Sciatic nerve (tissue), 2 donors: ENCODE measurements at regions of chr10 and their contacts with region 1.

Region 1: GRCh38 chr10:107148906-107149305 is 15.6 kb downstream of the SORCS1 start:
- DNase-seq: no peak
- ATAC-seq: no peak

Region 2: DNA sequence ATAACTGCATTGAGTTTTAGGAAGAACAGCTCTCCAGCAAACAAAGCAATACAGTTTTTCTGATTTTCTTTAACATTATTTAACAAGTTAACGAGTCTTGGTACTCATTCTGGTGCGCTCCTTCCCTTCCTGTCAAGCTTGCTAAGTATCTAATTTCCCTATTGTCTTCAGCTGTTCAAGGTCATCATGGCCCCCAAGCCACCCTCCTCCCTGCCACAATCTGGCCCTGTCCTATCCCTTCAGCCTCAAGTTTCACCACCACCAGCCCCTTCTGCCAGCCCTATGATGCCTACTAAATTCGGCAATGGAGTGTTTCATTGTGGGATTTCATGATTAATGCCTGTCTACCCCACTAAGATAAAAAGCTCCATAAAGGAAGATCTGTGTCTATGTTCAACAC is 105.4 kb before region 1 on chr10:
- intact Hi-C with region 1: loop called (anchors 5 kb)
- DNase-seq: no peak
- ATAC-seq: no peak

Region 3: GRCh38 chr10:107163881-107164861 is 15.3 kb after region 1 on chr10 and contains the start of gene SORCS1:
- intact Hi-C with region 1: no loop called
- DNase-seq: peak; percentile 69
- ATAC-seq: peak; percentile 39
- total RNA-seq, gene SORCS1: 80.5 TPM